Activated CD4-positive, alpha-beta T cell treated with anti-CD3 and anti-CD28 coated beads, Interleukin-2, amount 10 ng/mL, durations not matched to agents 24 days and 14 days (primary cell): ENCODE measurements at regions of chr1 and their contacts with region 1.

Region 1: DNA sequence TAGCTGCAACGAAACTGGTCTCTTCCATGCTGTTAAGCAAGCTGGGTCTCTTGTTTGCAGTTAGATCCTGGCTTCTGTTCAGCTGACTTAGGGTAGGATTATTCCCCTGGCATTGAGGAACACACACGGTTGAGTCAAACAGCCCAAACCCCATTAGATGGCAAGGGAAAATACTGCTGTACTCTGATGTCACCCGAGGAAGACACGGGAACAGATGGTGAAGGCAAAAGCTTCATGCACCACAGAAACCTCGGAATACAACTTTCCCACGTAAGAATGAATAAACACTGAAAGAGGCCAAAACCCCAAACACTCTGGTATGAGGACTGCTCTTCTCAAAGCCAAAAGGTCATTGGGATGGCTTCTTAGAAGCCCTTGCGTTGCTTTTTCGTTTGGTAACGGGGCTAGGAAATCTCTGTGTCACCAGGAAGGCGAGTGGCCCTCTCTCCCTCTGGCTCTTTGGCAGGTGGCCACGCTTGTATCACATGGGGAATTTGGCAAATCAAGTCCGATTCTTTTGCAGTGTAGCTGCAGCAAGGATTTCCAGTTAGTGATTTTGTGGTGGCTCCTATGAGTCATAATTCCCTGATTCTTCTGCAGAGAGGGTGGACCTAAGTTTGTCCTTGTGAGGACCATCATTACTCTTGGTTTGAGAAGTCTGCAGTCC is 16.7 kb upstream of the LYST start:
- DNase-seq: no peak
- H3K4me3 Mint-ChIP-seq: peak overlapping the region; percentile 65
- H3K27ac Mint-ChIP-seq: peak overlapping the region; percentile 79
- H3K4me1 Mint-ChIP-seq: peaks cover 57% of the 10 kb centered on the region
- H3K27me3 Mint-ChIP-seq: no peaks in the 10 kb centered on the region

Region 2: GRCh38 chr1:235855811-235856429 is 27.5 kb before region 1 on chr1:
- intact Hi-C with region 1: loop called (anchors 1 kb)
- DNase-seq: no peak
- H3K4me3 Mint-ChIP-seq: no peak overlapping the region
- H3K27ac Mint-ChIP-seq: peak overlapping the region; percentile 56
- H3K4me1 Mint-ChIP-seq: peaks cover 32% of the 10 kb centered on the region
- H3K27me3 Mint-ChIP-seq: no peaks in the 10 kb centered on the region

Region 3: DNA sequence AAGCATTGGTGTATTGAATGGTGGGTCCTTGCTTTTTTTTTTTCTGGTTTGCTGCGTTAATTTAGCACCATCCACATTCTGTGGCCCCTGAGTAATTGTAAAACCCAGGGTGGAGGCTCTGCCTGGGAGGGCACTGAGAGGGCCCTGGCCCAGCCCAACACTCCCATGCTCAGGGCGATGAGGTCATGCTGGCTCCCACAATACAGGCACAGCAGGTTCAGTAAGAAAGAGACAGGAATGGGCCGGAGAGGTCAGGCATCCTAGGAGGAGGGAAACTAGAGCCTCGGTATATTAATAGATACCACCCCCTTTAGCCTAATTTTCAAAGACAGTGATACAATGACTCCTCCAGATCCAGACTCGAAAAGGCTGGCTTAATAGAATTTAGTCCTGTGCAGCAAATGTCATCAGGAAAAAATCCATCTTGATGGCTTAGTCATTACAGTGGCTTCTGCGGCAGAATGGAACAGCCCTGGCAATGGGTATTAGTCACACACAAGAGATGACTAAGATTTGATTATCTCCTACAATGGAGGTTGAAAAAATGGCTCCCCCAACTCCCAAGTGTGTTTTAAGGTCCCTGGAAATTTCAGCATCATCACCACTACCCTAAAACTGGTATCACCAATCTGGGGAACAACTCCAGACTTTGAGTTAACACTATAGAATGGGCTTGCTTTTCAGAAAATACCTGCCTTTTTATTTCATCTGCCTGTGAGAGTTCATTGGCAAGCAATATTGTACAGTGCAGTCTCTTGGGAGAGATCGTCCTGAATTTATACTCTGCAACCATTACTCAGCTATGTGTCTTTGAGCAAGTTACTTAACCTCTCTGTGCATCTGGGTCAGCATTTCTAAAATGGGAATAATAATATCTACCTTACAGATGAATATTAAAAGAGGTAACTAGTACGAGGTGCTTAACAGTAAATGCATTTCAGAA is 27.2 kb after region 1 on chr1:
- intact Hi-C with region 1: loop called (anchors 1 kb)
- DNase-seq: peak; percentile 69
- H3K4me3 Mint-ChIP-seq: peak overlapping the region; percentile 18
- H3K27ac Mint-ChIP-seq: peak overlapping the region; percentile 84
- H3K4me1 Mint-ChIP-seq: peaks cover 33% of the 10 kb centered on the region
- H3K27me3 Mint-ChIP-seq: peaks cover 4% of the 10 kb centered on the region

Region 4: DNA sequence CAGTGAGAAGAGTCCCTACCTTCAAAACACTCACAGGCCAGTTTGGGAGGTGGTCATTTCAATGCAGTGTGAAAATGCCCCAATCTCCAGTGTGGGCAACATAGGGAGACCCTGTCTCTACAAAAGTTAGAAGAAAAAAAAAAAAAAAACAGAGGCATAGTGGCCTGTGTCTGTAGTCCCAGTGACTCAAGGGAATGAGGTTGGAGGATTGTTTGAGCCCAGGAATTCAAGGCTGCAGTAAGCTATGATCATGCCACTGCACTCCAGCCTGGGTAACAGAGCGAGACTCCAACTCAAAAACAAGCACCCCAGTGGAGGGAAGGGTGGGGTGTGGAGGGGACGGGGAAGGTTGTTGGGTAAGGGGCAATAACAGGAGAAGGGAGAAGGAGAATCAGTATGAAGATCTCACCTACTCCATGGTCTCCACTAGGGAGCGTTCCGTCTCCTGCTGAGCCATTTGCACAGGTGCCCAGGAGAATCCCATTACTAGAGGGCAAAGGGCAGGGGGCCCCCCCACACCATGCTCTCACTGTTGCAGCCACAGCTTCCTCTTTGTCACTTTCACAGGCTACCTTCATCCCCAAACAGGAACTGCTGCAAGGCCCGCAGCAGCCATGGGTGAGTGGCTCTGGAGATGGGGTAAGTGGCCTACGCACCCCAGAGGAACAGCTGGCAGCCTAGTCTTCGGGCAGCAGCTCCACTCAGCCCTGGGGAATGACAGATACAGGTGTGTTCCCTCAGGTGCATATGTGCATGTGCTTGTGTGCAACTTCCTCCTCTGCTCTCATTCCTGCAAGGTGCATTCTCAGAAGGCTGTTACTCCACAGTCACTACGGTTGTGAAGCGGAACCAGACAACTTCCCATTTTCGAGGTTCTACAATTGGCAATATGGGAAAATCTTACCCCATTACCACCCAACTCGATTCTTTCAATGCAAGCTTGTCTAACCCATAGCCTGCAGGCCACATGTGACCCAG is 71.2 kb after region 1 on chr1:
- intact Hi-C with region 1: loop called (anchors 1 kb)
- DNase-seq: peak; percentile 78
- H3K4me3 Mint-ChIP-seq: no peak overlapping the region
- H3K27ac Mint-ChIP-seq: no peak overlapping the region
- H3K4me1 Mint-ChIP-seq: peaks cover 37% of the 10 kb centered on the region
- H3K27me3 Mint-ChIP-seq: peaks cover 2% of the 10 kb centered on the region

Region 5: DNA sequence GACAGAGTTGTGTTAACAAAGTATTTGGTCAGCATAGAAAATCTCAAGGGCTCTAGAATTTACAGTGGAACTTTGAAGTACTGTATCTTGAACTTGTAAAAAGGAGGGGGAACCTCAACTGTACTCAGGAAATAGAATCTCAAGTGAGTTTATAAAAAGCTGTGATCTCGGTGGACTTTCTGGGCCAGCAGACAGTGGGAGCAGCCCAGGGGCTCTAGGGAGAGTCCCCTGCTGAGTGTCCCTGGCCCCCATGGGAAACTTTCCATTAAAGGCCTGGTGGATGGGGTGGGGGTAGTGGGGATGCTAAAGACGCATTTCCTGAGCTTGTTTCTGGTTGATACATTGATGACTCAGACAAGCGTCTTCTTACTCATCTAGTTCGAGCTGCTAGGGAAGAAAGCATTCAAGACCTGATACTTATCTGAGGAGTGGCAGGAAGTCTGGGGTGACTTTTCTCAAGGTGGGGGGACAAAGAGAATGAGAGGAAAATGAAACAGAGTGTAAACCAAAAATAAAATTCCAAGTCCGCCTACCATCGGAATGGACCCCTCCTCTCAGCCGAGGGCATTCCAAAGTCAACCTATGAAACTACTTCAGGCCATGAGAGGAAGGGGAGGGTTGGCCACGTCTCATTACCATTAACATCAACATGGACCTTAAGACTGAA is 116.0 kb after region 1 on chr1:
- intact Hi-C with region 1: loop called (anchors 1 kb)
- DNase-seq: peak; percentile 93
- H3K4me3 Mint-ChIP-seq: peak overlapping the region; percentile 75
- H3K27ac Mint-ChIP-seq: peak overlapping the region; percentile 97
- H3K4me1 Mint-ChIP-seq: peaks cover 62% of the 10 kb centered on the region
- H3K27me3 Mint-ChIP-seq: no peaks in the 10 kb centered on the region